SK-N-SH (cell line): ENCODE measurements at regions of chr2 and their contacts with region 1.

Region 1: DNA sequence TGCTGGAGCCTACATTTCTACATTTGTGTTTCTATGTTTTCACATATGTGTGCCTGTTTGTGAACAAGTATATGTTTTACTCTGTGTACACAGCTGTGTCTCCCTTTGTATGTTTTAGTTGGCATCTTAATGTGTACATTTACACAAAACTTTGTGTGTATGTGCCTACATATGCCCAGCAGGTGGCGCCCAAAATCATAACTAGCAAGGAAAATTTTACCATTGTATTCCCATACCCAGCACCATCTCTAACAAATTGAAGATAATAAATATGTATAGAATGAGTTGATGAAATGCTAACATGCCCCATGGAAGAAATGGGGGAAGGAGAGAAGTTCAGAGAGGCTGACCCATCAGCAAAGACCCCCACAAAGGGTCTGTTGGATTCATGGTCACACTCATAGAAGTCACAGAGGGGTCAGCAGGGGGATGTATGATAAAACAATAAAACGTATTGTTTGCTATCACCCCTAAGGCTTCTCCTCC is 48.1 kb downstream of the PKDCC start:
- DNase-seq: peak; percentile 78
- H3K4me3 ChIP-seq: no peak overlapping the region
- H3K27ac ChIP-seq: peak overlapping the region in 1 of 2 experiments; percentile 24; a peak in 2 of 4 replicates
- H3K4me1 ChIP-seq: peaks cover 0 to 15% of the 10 kb centered on the region in 2 experiments; a peak in 1 of 4 replicates
- H3K27me3 ChIP-seq: no peaks in the 10 kb centered on the region
- CTCF ChIP-seq: peak; percentile 98
- EP300 ChIP-seq: no peak; a peak in 1 of 4 replicates
- RAD21 ChIP-seq: peak; percentile 100

Region 2: DNA sequence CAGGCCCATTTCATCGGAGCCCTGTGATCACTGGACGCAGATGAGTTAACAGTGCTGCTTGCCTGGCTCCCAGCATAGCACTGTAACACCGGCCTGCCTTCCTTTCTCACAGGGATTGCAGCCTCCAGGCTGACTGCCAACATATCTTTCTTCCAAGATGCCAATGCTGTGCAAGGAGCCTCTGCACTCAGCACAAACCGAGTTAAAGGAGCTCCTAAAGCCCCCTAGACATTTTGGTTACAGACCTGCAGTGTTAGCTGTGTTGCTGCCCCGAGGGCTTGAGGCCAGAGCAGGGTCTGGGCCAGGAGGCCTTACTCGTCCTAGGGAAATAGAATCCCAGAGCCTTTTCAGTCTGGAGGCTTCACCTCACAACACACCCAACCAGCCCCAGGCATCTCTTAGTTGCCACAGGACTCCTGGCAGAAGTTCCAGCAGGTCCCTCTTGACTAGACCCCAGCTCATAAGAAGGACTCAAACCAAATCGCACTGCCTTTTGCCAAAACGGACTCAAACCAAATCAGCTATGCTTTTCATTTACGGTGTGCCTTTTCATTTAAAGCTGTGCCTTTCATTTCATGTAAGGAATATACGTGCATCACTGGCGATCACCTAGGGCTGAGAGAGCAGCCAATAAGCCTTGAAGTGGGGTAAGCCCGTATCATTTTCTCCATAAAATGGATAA is 14.8 kb after region 1 on chr2:
- CTCF ChIA-PET with region 1: interaction called, 44 read pairs
- POLR2A ChIA-PET with region 1: no interaction called
- DNase-seq: no peak
- H3K4me3 ChIP-seq: no peak overlapping the region
- H3K27ac ChIP-seq: peak overlapping the region in 1 of 2 experiments; percentile 44; a peak in 1 of 4 replicates
- H3K4me1 ChIP-seq: peaks cover 3 to 8% of the 10 kb centered on the region in 2 experiments; a peak in 3 of 4 replicates
- H3K27me3 ChIP-seq: no peaks in the 10 kb centered on the region
- CTCF ChIP-seq: no peak
- EP300 ChIP-seq: no peak
- RAD21 ChIP-seq: no peak

Region 3: DNA sequence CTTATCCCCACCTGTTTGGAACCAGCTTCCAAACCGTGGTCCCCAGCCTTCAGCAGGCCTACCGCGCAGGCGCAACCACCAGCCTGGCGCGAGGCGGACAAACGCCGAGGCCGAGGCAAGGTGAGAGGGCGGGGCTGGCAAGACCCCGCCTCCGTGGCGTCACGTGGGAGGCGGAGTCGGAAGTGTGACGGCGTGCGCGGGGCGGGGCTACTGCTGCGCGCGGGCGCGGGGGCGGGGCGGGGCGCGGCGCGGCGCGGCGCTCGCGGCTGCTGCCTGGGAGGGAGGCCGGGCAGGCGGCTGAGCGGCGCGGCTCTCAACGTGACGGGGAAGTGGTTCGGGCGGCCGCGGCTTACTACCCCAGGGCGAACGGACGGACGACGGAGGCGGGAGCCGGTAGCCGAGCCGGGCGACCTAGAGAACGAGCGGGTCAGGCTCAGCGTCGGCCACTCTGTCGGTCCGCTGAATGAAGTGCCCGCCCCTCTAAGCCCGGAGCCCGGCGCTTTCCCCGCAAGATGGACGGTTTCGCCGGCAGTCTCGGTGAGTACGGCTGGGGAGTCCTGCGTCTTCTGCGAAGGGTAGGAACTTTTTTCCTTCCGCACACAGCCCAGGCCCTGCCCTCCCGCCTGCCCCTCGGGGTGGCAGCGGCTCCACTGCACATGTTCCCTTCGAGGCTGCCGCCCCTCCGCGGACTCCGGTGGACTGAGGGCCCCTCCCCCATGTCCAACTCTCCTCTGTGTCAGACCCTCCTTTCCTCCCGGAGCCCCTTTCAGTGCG is 73.3 kb after region 1 on chr2 and contains the start of gene EML4:
- CTCF ChIA-PET with region 1: interaction called, 32 read pairs
- POLR2A ChIA-PET with region 1: no interaction called
- DNase-seq: peak; percentile 98
- H3K4me3 ChIP-seq: peak within 1 kb of the TSS; percentile 81 to 100
- H3K27ac ChIP-seq: peak within 1 kb of the TSS; percentile 72 to 92
- H3K4me1 ChIP-seq: peaks cover 16 to 24% of the 10 kb centered on the region in 2 experiments; a peak in 3 of 4 replicates
- H3K27me3 ChIP-seq: no peaks in the 10 kb centered on the region
- CTCF ChIP-seq: no peak
- EP300 ChIP-seq: no peak
- RAD21 ChIP-seq: 0 out of 2 replicates have a peak, but pooled peaks have one; percentile 8
- polyA plus RNA-seq, gene EML4: 35.0 and 45.8 TPM in 2 replicates

Region 4: GRCh38 chr2:42223855-42224268 is 127.9 kb after region 1 on chr2:
- CTCF ChIA-PET with region 1: interaction called, 13 read pairs
- POLR2A ChIA-PET with region 1: no interaction called
- DNase-seq: no peak
- H3K4me3 ChIP-seq: no peak overlapping the region
- H3K27ac ChIP-seq: peak overlapping the region; percentile 41 to 60
- H3K4me1 ChIP-seq: peaks cover 10 to 23% of the 10 kb centered on the region in 2 experiments; a peak in 3 of 4 replicates
- H3K27me3 ChIP-seq: no peaks in the 10 kb centered on the region
- CTCF ChIP-seq: no peak
- EP300 ChIP-seq: no peak
- RAD21 ChIP-seq: no peak

Region 5: GRCh38 chr2:42328148-42328833 is 232.3 kb after region 1 on chr2:
- CTCF ChIA-PET with region 1: interaction called, 96 read pairs
- POLR2A ChIA-PET with region 1: interaction called, 5 read pairs
- DNase-seq: no peak
- H3K4me3 ChIP-seq: no peak overlapping the region
- H3K27ac ChIP-seq: peak overlapping the region in 1 of 2 experiments; percentile 34; a peak in 2 of 4 replicates
- H3K4me1 ChIP-seq: no peaks in the 10 kb centered on the region; a peak in 1 of 4 replicates
- H3K27me3 ChIP-seq: no peaks in the 10 kb centered on the region
- CTCF ChIP-seq: peak; percentile 82
- EP300 ChIP-seq: no peak
- RAD21 ChIP-seq: peak; percentile 70

Region 6: DNA sequence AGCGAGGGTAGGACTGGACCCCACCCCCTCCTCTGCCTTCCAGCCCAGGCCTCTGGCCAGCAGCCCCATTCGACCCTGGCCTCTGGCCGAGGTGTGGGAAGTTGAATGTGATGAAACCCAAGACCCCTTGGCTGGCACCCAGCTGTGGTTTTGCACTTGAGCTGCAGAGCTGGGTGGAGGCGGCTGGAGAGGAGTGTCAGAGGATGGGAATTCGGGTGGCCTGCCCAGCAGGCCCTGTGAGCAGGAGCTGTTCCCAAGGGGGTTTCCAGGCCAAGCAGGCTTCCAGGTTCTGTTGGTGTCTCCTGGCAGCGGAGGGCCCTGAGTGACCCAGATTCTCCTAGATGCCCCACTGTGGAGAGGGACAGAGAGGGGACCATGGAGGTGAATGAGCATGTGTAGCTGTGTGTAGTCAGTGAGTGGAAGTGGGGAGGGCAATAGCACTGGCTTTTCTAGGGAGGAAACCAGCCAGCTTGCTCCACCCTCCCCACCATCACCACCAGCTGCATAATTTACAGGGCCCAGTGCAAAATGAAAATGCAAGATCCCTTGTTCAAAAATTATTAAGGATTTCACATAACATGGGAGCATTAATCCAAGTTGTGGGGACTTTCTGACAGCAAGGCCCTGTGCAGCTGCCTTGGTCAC is 868.6 kb after region 1 on chr2:
- CTCF ChIA-PET with region 1: no interaction called
- POLR2A ChIA-PET with region 1: no interaction called
- DNase-seq: no peak
- H3K4me3 ChIP-seq: no peak overlapping the region
- H3K27ac ChIP-seq: peak overlapping the region; percentile 43 to 85; a peak in 3 of 4 replicates
- H3K4me1 ChIP-seq: peaks cover 38 to 41% of the 10 kb centered on the region in 2 experiments; a peak in 3 of 4 replicates
- H3K27me3 ChIP-seq: no peaks in the 10 kb centered on the region
- CTCF ChIP-seq: no peak
- EP300 ChIP-seq: peak in 1 of 2 experiments; percentile 94; a peak in 2 of 4 replicates
- RAD21 ChIP-seq: no peak